Right lobe of liver (tissue), 6 donors: ENCODE measurements at regions of chr1 and their contacts with region 1.

Region 1: DNA sequence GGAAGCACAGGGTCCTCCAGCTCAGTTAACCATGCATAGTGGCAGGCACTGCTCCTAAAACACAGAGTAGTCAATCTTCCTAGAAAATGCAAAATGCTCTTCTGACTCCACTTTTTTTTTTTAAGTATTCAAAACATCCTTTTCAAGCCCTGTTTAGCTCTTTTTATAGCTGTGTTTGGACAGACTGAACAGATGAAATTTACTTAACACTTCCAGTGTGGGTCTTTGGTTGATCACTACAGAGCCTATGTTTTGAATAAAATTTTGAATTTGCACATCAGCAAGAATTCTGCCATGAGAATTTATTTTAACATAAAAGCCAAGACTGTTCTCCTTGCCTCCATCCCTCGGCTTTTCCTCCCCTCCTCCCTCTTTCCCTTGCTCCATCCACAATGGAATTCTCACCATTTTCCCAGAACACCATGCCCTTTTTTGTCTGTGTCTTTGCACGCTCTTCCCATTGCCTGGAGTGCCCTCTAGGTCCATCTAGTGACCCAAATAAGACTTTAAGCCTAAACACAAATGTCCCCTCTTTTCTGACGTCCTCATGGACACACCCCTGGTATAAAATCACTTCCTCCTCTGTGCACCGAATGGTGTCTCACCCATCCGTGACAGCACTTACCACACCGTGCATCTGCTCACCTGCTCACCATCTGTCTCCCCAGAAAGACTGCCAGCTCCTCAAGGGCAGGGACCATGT is 24.0 kb upstream of the CPT2 start:
- DNase-seq: no peak
- ATAC-seq: peak in 1 of 4 donors; percentile 4
- H3K4me3 ChIP-seq: no peak overlapping the region
- H3K27ac ChIP-seq: no peak overlapping the region
- H3K4me1 ChIP-seq: peaks cover 0 to 27% (median 12%) of the 10 kb centered on the region in 4 donors
- H3K27me3 ChIP-seq: no peaks in the 10 kb centered on the region
- CTCF ChIP-seq: peak in 3 of 4 donors; percentile 9 to 42 (median 17)
- POLR2A ChIP-seq: no peak

Region 2: GRCh38 chr1:52904927-52905698 is 267.5 kb before region 1 on chr1:
- intact Hi-C with region 1: loop called in 1 of 2 experiments (anchors 10 kb)
- DNase-seq: no peak
- ATAC-seq: peak in 3 of 4 donors; percentile 1 to 4 (median 3)
- H3K4me3 ChIP-seq: no peak overlapping the region
- H3K27ac ChIP-seq: peak overlapping the region; percentile 45 to 76 (median 59)
- H3K4me1 ChIP-seq: peaks cover 0 to 80% (median 40%) of the 10 kb centered on the region in 4 donors
- H3K27me3 ChIP-seq: no peaks in the 10 kb centered on the region
- CTCF ChIP-seq: peak; percentile 14 to 27 (median 17)
- POLR2A ChIP-seq: no peak

Region 3: GRCh38 chr1:53025034-53025768 is 147.4 kb before region 1 on chr1:
- intact Hi-C with region 1: loop called in 1 of 2 experiments (anchors 10 kb)
- DNase-seq: peak; percentile 34 to 63 (median 61)
- ATAC-seq: peak; percentile 81 to 96 (median 89)
- H3K4me3 ChIP-seq: no peak overlapping the region
- H3K27ac ChIP-seq: peak overlapping the region; percentile 13 to 52 (median 31)
- H3K4me1 ChIP-seq: peaks cover 0 to 32% (median 11%) of the 10 kb centered on the region in 4 donors
- H3K27me3 ChIP-seq: no peaks in the 10 kb centered on the region
- CTCF ChIP-seq: no peak
- POLR2A ChIP-seq: no peak

Region 4: DNA sequence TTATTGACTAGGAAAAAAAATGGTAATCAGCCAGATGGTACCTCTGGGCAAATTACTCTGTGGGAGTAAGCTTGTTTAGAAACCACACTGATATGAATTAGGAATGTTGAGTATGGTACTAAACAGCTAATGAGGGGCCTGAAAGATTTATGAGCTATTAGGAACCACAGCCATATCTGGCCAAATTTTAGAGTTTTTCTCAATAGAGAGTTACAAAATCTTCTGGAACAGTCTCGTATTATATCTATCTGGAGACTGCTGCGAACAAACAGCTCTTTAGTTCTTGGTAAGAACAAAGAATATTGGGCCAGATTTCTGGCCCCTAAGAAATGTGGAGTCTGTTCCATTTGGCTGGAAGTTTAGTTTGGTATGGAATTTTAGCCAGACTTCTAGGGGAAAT is 115.5 kb before region 1 on chr1:
- intact Hi-C with region 1: no loop called
- DNase-seq: no peak
- ATAC-seq: no peak
- H3K4me3 ChIP-seq: no peak overlapping the region
- H3K27ac ChIP-seq: no peak overlapping the region
- H3K4me1 ChIP-seq: peaks cover 0 to 4% (median under 1%) of the 10 kb centered on the region in 4 donors
- H3K27me3 ChIP-seq: peaks cover 0 to under 1% of the 10 kb centered on the region in 2 donors
- CTCF ChIP-seq: no peak
- POLR2A ChIP-seq: no peak

Region 5: DNA sequence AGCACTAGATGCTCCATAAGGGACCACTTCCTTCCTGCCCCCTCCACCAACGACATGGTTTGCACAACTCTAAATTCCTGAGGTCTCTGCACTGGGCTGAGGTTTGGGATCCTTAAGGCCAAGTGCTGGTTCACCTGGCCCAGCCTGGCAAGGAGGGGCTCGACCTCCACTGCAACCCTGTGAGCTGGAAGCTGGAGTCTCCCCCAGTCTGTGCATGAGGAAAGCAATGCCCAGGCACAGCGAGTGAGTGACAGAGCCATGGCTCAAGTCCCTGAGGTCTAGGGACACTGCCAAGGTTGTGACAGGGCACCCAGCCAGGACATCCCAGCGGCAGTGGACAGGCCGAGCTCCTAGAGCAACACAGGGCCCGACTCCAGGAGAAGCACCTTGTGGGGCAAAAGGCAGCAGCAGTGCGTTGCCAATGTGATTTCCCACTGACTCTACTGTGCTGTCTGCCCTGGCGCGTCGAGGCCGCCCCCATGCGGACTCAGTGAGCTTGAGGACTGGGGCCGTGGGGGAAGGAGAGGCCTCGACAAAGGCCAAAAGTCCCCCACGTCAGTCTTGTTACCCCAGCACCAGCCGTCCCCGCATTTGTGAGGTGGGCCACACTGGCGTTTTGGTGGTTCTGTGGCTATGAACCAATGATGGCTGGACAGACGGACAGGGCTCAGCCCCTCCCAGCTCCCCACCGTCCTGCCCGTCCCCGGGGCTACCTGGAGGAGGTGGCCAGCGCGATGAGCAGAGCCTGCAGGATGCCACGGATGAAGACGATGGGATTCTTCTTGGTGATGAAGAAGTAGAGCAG is 80.5 kb before region 1 on chr1:
- intact Hi-C with region 1: loop called in 1 of 2 experiments (anchors 10 kb)
- DNase-seq: peak; percentile 81 to 93 (median 93)
- ATAC-seq: peak; percentile 71 to 87 (median 83)
- H3K4me3 ChIP-seq: no peak overlapping the region
- H3K27ac ChIP-seq: no peak overlapping the region
- H3K4me1 ChIP-seq: peaks cover 0 to 20% (median 0%) of the 10 kb centered on the region in 4 donors
- H3K27me3 ChIP-seq: no peaks in the 10 kb centered on the region
- CTCF ChIP-seq: no peak
- POLR2A ChIP-seq: no peak

Region 6: DNA sequence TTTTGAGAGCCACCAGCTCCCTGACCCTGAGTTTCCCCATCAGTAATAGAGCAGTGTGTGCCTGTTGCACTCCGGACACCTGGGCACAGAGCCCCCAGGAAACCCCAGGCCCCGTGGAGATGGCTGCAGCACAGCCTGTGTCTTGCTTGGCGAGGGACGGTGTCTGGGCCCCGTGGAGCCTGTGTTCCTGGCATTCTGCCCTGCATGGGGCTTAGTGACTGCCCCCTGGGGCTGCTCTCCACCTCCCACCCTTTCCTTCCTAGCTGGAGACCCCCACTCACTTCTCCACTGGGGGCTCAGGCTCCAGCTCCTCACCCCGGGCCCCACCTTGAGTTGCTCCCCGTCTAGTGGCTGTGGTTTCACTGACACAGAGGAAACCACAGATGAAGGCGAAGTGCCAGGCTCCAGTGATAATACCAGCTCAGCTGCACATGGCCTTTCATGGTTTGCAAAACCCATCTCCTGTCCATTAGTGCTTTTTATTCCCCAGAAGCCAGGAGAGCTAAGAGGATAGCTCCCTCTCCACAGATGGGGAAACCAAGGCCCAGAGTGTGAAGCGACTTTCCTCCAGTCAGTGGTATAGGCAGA is 326.1 kb after region 1 on chr1:
- intact Hi-C with region 1: no loop called
- DNase-seq: no peak
- ATAC-seq: no peak
- H3K4me3 ChIP-seq: no peak overlapping the region
- H3K27ac ChIP-seq: no peak overlapping the region
- H3K4me1 ChIP-seq: no peaks in the 10 kb centered on the region
- H3K27me3 ChIP-seq: no peaks in the 10 kb centered on the region
- CTCF ChIP-seq: no peak
- POLR2A ChIP-seq: no peak